Gastrocnemius medialis (tissue), 4 donors: ENCODE measurements at regions of chr18 and their contacts with region 1.

Region 1: DNA sequence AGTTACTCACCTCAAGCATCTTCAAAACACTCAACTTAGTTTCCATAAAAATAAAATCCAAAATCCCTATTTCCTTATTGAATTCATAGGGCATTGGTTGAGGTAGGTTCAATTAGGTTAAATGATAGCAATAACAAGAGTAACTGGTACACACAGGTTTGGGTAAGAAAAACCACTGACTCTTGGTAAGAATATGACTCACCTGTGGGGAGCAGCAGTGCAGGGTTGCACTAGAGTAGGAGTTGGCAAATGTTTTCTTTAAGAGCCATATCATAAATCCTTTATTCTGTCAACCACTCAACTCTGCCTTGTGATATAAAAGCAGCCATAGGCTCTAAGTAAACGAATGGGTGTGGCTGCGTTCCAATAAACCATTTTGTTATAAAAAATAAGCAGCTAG is 71.4 kb upstream of the CDH20 start:
- DNase-seq: no peak
- ATAC-seq: no peak
- H3K4me3 ChIP-seq: no peak overlapping the region
- H3K27ac ChIP-seq: no peak overlapping the region
- H3K4me1 ChIP-seq: no peaks in the 10 kb centered on the region
- H3K27me3 ChIP-seq: no peaks in the 10 kb centered on the region
- CTCF ChIP-seq: no peak
- POLR2A ChIP-seq: no peak

Region 2: GRCh38 chr18:61854578-61855448 is 592.9 kb after region 1 on chr18:
- in situ Hi-C with region 1: no loop called
- intact Hi-C with region 1: loop called (anchors 5 kb)
- DNase-seq: no peak
- ATAC-seq: no peak
- H3K4me3 ChIP-seq: no peak overlapping the region
- H3K27ac ChIP-seq: no peak overlapping the region
- H3K4me1 ChIP-seq: peaks cover 0 to 20% of the 10 kb centered on the region in 2 donors
- H3K27me3 ChIP-seq: no peaks in the 10 kb centered on the region
- CTCF ChIP-seq: no peak
- POLR2A ChIP-seq: no peak